Naive thymus-derived CD4-positive, alpha-beta T cell (primary cell): ENCODE measurements at regions of chr9 and their contacts with region 1.

Region 1: DNA sequence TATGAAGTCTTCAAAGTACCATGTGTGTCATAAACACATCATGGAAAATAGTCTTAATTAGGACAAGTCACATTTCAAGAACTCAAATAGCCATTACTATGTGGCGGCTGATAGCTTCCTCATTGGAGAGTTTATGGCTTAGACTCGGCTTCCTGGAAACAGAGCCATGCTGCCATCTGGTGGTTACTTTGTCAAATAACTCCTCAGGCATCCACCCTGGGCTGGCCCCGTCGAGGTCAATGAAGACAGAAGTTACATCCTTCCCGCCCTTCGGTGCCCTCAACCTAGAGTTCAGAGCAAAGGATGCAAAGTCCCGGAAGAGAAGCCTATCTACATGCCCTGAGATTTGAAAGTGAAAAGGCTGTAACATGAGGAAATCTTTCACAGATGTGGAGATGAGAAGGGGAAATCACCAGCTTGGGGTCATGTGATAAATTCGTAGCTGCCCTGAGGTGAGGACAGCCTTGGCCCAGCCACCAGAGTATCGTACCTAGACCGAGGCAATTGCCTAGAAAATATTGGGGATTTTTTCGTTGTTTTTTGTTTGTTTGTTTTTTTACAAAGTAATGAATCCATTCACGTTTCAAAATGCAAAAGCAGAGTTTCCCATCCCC is 45.5 kb upstream of the ZNF169 start:
- DNase-seq: peak; percentile 39 to 76 (median 69)
- ATAC-seq: peak; percentile 97
- H3K4me3 ChIP-seq: no peak overlapping the region
- H3K4me3 Mint-ChIP-seq: peak overlapping the region in 6 of 10 donors; percentile 9 to 37 (median 14)
- H3K27ac ChIP-seq: no peak overlapping the region
- H3K27ac Mint-ChIP-seq: peak overlapping the region in 1 of 9 donors; percentile 76
- H3K4me1 ChIP-seq: no peaks in the 10 kb centered on the region
- H3K4me1 Mint-ChIP-seq: peaks cover 3 to 6% (median 4%) of the 10 kb centered on the region in 7 donors
- H3K27me3 ChIP-seq: no peaks in the 10 kb centered on the region
- H3K27me3 Mint-ChIP-seq: peaks cover 12 to 28% (median 21%) of the 10 kb centered on the region in 5 donors

Region 2: DNA sequence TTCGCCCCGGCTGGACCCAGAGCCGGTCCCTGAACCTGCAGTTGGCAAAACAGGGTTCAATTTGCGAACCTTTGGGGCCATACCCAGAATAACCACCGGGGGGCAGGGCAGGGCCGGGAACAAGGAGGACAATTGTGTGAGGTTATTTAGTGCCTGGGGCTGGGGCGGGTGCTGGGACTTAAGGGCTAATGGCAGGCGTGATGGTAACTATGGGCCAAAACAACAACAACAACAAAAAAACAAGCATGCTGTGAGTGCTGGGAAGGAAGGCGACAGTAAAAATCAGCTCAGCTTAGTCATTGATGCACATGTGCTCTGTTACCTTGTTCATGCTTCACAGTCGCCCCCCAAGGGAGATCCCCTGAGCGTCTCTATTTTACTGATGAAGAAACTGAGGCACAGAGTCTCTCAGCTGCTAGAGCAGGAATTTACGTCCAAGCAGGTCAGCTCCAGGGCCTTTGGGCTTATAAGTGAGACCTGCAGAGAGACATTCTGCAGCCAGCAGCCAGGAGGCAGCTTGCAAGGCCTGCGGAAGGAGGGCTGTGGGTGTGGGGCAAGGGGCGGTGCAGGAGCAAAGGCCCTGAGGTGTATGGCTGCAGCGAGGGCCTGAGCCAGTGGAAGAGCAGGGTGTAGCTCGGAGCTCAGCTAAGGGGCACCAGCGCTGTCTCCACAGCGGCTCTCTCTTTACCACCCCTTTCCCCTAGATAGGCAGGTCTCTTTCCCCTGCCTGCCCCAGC is 531.2 kb before region 1 on chr9:
- CTCF ChIA-PET with region 1: no interaction called
- POLR2A ChIA-PET with region 1: no interaction called
- intact Hi-C with region 1: loop called in 1 of 2 experiments (anchors 10 kb)
- DNase-seq: peak; percentile 23 to 64 (median 49)
- ATAC-seq: peak; percentile 62
- H3K4me3 ChIP-seq: no peak overlapping the region
- H3K4me3 Mint-ChIP-seq: no peak overlapping the region
- H3K27ac ChIP-seq: no peak overlapping the region
- H3K27ac Mint-ChIP-seq: no peak overlapping the region
- H3K4me1 ChIP-seq: no peaks in the 10 kb centered on the region
- H3K4me1 Mint-ChIP-seq: peaks cover 0 to 3% (median 0%) of the 10 kb centered on the region in 7 donors
- H3K27me3 ChIP-seq: no peaks in the 10 kb centered on the region
- H3K27me3 Mint-ChIP-seq: peaks cover 0 to 26% (median 11%) of the 10 kb centered on the region in 5 donors

Region 3: DNA sequence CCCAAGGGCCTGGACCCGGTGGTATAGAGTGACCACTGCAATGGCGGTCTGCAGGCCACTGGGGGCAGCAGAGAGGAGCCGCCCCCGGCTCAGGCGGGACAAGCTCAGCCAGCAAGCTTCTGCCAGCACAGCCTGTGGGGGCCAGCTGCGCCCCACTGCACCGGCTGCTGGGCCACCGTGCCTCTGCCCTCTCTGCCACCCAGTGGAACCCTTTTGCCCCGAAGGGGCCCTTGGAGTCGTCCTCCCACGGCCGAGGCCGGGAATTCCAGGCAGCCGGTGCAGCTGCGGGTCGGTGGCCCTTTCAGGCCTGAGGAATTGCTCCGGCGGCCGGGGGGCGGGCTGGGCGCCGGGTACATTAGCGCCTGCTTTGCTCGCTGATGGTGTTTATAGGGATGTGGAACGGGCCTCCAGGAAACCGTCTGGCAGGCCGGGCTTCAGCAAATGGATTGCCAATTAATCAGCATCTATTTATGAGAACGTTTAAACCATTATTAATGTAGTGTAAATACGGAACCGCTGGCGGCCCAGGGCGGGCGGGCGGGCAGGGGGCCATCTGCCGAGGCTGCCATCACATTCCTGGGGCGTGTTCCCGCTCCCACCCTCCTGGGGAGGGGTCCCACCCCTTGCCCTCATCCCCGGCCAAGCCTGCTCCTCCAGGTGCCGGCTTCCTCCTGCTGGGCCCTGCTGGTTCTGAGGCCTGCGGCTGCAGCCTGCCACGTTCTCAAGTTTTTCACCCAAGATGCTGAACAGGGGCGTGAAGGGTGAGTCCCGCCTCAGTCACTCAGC is 385.9 kb before region 1 on chr9:
- CTCF ChIA-PET with region 1: no interaction called
- POLR2A ChIA-PET with region 1: no interaction called
- intact Hi-C with region 1: loop called in 1 of 2 experiments (anchors 2 kb)
- DNase-seq: peak in 6 of 9 donors; percentile 19 to 56 (median 29)
- ATAC-seq: peak; percentile 75
- H3K4me3 ChIP-seq: no peak overlapping the region
- H3K4me3 Mint-ChIP-seq: peak overlapping the region in 2 of 10 donors; percentile 60 to 72
- H3K27ac ChIP-seq: no peak overlapping the region
- H3K27ac Mint-ChIP-seq: no peak overlapping the region
- H3K4me1 ChIP-seq: no peaks in the 10 kb centered on the region
- H3K4me1 Mint-ChIP-seq: peaks cover 3 to 15% (median 12%) of the 10 kb centered on the region in 7 donors
- H3K27me3 ChIP-seq: no peaks in the 10 kb centered on the region
- H3K27me3 Mint-ChIP-seq: peaks cover 33 to 64% (median 53%) of the 10 kb centered on the region in 5 donors

Region 4: DNA sequence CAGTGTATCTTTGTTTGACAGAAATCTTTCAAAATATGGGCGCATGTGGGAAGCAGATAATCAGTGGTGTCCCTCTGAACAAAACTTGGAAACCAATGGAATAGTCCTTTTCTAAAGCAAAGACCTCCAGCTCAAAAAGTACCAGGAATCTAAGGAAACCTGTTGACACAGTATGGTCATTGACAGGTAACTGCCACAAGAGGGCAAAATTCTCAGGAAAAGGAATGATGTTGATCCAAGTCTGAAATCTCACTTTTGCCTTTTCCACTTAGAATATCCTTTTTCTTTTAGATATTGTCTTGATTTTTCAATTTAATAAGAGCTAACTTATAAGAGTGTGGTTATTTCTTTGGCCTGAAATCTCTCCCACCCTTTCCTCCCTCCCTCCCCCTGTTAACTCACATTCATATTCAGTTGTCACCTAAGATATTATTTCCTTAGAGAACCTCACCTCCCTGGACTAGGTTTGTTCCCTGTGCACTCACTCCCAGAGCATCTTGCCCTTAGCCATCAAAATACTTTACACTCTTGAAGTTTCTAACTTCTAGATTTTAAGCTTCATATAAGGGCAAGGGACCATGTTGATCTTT is 199.5 kb before region 1 on chr9:
- CTCF ChIA-PET with region 1: interaction called, 10 read pairs
- POLR2A ChIA-PET with region 1: no interaction called
- intact Hi-C with region 1: loop called (anchors 1 kb)
- DNase-seq: no peak
- ATAC-seq: no peak
- H3K4me3 ChIP-seq: no peak overlapping the region
- H3K4me3 Mint-ChIP-seq: no peak overlapping the region
- H3K27ac ChIP-seq: no peak overlapping the region
- H3K27ac Mint-ChIP-seq: peak overlapping the region in 1 of 9 donors; percentile 23
- H3K4me1 ChIP-seq: peaks cover 0 to 18% of the 10 kb centered on the region in 2 donors
- H3K4me1 Mint-ChIP-seq: peaks cover 4 to 36% (median 25%) of the 10 kb centered on the region in 7 donors
- H3K27me3 ChIP-seq: no peaks in the 10 kb centered on the region
- H3K27me3 Mint-ChIP-seq: peaks cover 0 to 5% (median 3%) of the 10 kb centered on the region in 5 donors

Region 5: GRCh38 chr9:94065535-94065961 is 148.1 kb before region 1 on chr9:
- CTCF ChIA-PET with region 1: interaction called, 134 read pairs
- POLR2A ChIA-PET with region 1: no interaction called
- intact Hi-C with region 1: loop called (anchors 1 kb)
- DNase-seq: peak; percentile 40 to 75 (median 66)
- ATAC-seq: peak; percentile 79
- H3K4me3 ChIP-seq: no peak overlapping the region
- H3K4me3 Mint-ChIP-seq: no peak overlapping the region
- H3K27ac ChIP-seq: no peak overlapping the region
- H3K27ac Mint-ChIP-seq: no peak overlapping the region
- H3K4me1 ChIP-seq: peaks cover 0 to 3% of the 10 kb centered on the region in 2 donors
- H3K4me1 Mint-ChIP-seq: peaks cover 0 to 8% (median 5%) of the 10 kb centered on the region in 7 donors
- H3K27me3 ChIP-seq: no peaks in the 10 kb centered on the region
- H3K27me3 Mint-ChIP-seq: no peaks in the 10 kb centered on the region

Region 6: DNA sequence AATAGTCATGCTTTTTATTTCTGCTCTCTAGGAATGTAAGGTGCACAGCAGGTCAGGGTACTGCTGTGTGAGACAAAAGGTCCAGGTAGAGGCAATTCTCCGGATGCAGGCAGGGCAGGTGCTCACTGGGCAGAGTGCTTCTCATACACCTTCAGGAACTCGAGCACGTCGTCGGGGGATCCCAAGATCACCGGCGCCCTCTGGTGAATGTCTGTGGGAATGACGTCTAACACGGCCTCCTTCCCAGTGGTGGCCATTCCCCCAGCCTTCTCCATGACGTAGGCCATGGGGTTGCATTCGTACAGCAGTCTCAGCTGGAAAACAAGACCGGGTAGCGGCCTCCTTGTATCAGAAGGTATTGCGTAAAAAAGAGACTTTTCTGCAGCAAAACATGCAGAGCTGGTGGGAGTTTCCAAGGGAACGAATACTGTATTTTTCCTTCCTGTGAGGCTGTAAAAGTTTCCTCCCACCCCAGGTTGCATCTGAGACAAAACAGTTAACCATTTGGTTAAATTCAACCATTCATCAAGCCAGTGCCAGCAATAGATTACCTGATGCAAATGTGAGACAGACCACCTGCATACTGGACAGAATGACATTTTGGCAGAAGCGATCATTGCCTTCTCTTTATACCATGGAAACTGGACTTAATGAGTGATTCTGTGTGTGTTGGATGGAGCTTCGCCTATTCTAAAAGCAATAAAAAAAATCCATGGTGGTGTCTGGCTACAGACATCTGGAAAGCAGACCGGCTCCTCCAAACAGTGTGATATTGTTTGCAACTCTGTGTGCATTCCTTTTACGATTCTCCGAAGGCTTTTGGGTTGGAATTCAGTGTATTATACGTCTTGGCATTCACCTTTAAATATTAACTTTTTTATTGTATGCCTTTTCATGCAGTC is 389.9 kb after region 1 on chr9:
- CTCF ChIA-PET with region 1: no interaction called
- POLR2A ChIA-PET with region 1: no interaction called
- intact Hi-C with region 1: loop called in 1 of 2 experiments (anchors 5 kb)
- DNase-seq: peak; percentile 19 to 70 (median 60)
- ATAC-seq: peak; percentile 89
- H3K4me3 ChIP-seq: no peak overlapping the region
- H3K4me3 Mint-ChIP-seq: no peak overlapping the region
- H3K27ac ChIP-seq: no peak overlapping the region
- H3K27ac Mint-ChIP-seq: peak overlapping the region in 1 of 9 donors; percentile 41
- H3K4me1 ChIP-seq: no peaks in the 10 kb centered on the region
- H3K4me1 Mint-ChIP-seq: peaks cover 3 to 7% (median 6%) of the 10 kb centered on the region in 7 donors
- H3K27me3 ChIP-seq: peaks cover 0 to 3% of the 10 kb centered on the region in 2 donors
- H3K27me3 Mint-ChIP-seq: peaks cover 0 to 18% (median 0%) of the 10 kb centered on the region in 5 donors